AG04449 (cell line): ENCODE measurements at regions of chr2 and their contacts with region 1.

Region 1: DNA sequence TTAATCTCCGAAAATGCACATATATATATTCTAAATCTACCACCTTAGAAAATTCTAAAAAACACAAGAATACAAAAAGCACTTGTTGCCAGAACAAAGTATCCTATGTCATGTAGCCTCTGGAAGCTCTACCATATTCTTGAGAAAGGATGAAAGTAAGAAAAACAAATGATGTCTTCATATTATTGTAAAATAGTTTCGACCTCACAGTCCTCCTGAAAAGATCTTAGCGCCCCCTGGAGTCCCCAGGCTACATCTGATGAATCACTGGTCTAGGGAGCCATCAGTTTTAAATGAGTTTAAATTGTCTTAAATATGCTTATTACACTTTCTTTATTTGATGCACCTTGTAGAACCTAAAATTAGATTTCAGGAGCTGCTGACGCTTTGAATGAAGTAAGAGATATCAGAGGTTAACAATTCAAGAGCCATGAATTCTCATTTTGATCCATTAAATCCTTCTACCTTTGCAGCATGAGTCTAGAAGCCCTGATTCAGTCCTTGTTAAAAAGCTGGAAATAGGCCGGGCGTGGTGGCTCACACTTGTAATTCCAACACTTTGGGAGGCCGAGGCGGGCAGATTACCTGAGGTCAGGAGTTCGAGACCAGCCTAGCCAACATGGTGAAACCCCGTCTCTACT is 138.8 kb downstream of the MCFD2 start:
- DNase-seq: no peak
- H3K4me3 ChIP-seq: no peak overlapping the region
- CTCF ChIP-seq: peak; percentile 39

Region 2: DNA sequence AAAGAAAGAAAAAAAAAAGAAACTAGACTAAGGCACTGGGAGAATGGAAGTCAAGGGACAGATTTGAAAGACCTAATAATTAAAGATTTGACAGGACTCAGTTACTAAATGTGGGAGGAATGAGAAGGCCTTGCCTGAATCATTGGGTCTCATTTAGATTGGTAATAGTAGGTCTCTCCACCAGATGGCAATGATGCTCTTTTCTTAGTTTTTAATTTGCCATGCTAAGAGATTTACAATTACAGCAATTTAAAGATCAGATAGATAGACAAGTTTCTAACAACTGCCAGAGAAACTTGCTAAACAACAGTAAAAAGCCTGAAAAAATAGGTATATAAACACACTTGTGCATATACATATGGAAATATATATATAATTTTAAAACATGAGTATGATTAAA is 144.5 kb before region 1 on chr2:
- CTCF ChIA-PET with region 1: interaction called, 12 read pairs
- POLR2A ChIA-PET with region 1: no interaction called
- DNase-seq: no peak
- H3K4me3 ChIP-seq: no peak overlapping the region
- CTCF ChIP-seq: peak; percentile 43

Region 3: DNA sequence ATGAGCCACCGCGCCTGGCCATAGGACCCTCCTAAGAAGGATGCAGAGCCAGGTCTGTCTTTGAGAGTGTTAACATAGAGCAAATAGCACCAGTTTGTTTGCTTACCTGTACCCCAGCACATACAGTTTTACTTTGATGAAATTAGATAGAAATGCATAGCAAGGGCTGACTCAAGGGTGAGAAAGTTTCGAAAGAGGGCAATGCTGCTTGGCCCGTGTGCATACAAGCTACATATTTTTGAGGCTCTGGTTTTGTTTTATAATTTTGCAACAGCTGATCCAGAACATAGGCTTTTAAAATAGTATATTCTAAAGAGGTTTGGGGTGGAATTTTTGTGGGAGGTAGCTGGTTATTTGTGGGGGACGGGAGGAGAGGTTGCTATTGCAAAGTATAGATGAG is 12.9 kb before region 1 on chr2:
- CTCF ChIA-PET with region 1: interaction called, 16 read pairs
- POLR2A ChIA-PET with region 1: no interaction called
- DNase-seq: no peak
- H3K4me3 ChIP-seq: no peak overlapping the region
- CTCF ChIP-seq: no peak

Region 4: GRCh38 chr2:46793423-46794416 is 16.9 kb after region 1 on chr2:
- CTCF ChIA-PET with region 1: interaction called, 38 read pairs
- POLR2A ChIA-PET with region 1: interaction called, 3 read pairs
- DNase-seq: no peak
- H3K4me3 ChIP-seq: no peak overlapping the region
- CTCF ChIP-seq: no peak

Region 5: DNA sequence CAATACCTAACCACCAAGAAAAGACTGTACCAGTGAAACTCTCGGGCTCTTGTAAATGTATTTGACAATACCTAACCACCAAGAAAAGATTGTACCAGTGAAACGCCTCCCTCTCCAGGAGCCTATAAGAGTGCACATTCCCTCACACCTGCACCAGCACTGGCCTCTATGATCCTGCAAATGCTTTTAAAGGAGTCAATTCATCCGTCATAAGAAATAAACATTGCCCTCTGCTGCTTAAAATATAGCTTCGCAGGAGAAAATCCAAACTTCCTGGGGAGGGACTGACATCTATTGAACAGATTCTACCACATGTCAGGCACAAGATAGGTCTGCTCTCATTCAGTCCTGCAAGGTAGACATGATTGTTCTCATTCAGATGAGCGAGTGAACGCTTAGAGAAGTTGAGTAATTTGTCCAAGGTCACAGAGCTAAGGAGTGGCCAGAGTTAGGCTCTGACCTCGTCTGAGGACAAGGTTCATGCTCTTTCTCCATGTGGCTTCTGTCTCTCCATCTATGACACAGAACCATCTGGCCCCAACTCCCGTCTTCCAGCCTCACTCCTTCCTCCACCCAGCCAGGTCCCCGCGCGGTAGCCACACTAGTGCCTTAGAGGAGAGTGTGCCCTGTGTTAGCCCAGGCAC is 100.1 kb after region 1 on chr2:
- CTCF ChIA-PET with region 1: interaction called, 18 read pairs
- POLR2A ChIA-PET with region 1: no interaction called
- DNase-seq: no peak
- H3K4me3 ChIP-seq: no peak overlapping the region
- CTCF ChIP-seq: peak; percentile 19